Activated CD8-positive, alpha-beta memory T cell treated with anti-CD3 and anti-CD28 coated beads, Interleukin-2, amount 10 ng/mL, durations not matched to agents 7 days and 5 days (primary cell): ENCODE measurements at regions of chr9 and their contacts with region 1.

Region 1: DNA sequence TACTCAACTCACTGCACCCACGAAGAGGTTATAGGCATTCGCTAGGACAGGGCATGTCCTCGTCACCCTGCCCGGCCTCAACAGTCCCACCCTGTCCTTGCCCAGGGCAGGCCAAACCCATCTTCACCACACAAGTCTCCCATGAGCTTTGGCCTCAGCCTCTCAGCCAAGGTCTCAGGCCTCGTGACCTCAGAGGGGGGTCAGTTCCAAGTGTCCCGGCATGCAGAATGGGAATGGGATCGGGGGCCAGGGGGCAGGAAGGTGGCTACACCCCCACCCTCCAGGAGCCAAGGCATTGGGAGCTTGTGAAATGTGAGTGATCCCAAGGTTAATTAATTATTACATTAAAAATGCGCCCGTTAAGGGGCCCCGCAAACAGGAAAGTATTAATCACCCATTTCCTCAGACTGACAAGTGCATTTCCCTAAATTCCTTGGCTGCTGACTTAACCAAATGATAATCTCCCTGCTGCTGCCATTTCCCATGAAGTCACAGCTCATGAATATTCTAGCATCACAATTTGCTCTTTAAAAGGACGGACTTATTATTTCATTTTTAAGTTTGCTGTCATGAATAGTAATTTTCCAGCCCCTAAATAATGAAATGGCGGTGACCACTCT is 8.0 kb upstream of the UBAC1 start:
- DNase-seq: no peak
- ATAC-seq: no peak
- H3K4me3 Mint-ChIP-seq: no peak overlapping the region
- H3K27ac Mint-ChIP-seq: no peak overlapping the region
- H3K4me1 Mint-ChIP-seq: peaks cover 13% of the 10 kb centered on the region
- H3K27me3 Mint-ChIP-seq: peaks cover 2% of the 10 kb centered on the region

Region 2: DNA sequence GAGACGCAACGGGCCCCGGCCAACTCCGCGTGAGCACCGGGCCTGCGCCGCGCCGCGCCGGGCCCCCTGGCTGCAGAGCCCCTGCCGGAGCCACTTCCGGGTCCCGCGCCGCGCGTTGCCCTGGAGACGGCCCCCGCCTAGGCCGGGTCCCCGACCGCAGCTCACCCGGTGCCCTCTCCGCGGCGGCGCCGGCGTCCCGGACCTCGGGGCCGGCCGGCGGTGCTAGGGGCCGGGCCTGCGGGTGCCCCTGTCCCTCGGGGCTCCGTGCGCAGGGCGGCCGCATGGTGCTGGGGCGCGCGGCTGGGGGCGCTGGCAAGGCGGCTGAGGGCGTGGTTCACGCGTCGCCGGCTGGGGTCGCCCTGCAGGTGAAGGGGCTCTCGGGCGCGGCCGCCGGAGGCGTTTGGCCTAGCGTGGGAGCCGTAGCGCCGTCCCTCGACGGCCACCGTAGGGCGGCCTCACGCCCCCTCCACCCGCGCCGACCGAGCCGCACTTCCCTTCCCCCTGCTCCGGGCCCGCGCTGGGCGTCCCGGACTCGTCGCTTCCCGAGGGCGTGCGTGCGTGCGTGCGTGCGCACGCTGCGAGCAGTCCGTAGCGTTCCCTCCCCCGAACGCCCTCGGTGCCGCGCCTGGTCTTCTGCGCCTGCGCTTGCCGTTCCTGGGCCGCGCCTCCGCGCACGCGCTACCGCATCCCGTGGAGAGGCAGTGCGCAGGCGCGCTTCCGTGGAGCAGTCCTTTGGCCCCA is 149.3 kb after region 1 on chr9 and contains the start of gene TMEM250:
- CTCF ChIA-PET with region 1: interaction called, 76 read pairs
- DNase-seq: peak; percentile 98
- ATAC-seq: peak; percentile 91
- H3K4me3 Mint-ChIP-seq: peak within 1 kb of the TSS; percentile 79
- H3K27ac Mint-ChIP-seq: peak within 1 kb of the TSS; percentile 80
- H3K4me1 Mint-ChIP-seq: peaks cover 33% of the 10 kb centered on the region
- H3K27me3 Mint-ChIP-seq: no peaks in the 10 kb centered on the region
- total RNA-seq, gene TMEM250: 42.5 to 44.5 TPM

Region 3: DNA sequence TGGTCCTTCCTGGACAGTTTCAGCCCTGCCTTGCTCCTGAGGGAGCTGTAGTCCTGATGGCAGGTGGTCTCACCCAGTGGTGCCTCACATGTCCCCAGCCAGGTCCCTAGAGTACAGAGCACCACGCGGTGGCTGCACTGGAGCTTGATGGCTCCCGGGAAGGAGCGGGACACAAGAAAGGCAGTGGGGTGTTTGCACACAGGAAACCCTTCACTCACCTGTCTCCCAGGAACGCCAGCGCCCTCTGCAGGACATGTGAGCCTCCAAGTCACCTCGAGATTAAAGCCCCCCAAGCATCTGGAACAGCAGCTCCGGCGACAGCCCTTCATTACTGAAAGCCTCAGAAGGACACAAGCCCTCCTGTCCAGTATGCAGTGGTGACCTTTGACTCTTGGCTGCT is 169.4 kb after region 1 on chr9:
- CTCF ChIA-PET with region 1: interaction called, 11 read pairs
- DNase-seq: peak; percentile 69
- ATAC-seq: no peak
- H3K4me3 Mint-ChIP-seq: no peak overlapping the region
- H3K27ac Mint-ChIP-seq: no peak overlapping the region
- H3K4me1 Mint-ChIP-seq: no peaks in the 10 kb centered on the region
- H3K27me3 Mint-ChIP-seq: peaks cover 11% of the 10 kb centered on the region